IMR-90 (cell line): ENCODE measurements at regions of chr13 and their contacts with region 1.

Region 1: DNA sequence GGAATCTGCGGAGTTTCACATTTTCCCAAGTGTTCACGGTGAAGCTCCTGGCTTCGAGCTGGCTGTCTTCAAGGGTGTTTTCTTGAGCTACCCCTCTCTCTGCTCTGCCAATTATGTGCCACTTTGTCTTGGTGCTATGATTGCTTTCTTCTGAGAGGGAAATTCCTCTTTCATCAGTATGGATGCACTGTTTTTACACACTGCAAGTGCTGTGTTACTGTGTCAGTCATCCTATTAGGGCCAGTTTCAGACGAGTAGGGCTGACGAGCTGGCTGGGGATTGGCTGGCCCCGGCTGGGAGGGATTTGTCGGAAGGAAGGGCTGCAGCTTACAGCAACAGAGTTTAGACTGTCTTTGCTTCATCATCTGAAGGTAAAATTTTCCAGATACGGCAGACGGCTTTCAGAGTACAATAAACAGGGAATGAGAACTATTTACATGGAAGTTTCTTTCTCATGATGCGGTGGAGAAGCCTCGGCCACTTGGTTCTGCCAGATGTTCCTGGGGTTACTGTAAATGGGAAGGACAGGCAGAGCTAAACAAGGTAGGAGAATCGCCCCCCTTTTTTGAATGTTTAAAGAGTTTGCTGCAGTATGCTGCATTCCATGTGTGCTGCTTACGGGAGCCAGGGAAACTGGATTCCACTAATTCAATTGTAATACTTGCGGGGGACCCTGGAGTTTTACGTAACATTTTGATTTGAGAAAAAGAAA is at the start of gene MBNL2:
- DNase-seq: peak; percentile 94
- ATAC-seq: peak; percentile 97
- H3K4me3 ChIP-seq: peak within 1 kb of the TSS; percentile 90
- H3K27ac ChIP-seq: peak within 1 kb of the TSS; percentile 95
- H3K4me1 ChIP-seq: peaks cover 11% of the 10 kb centered on the region
- H3K27me3 ChIP-seq: no peaks in the 10 kb centered on the region
- CTCF ChIP-seq: no peak
- POLR2A ChIP-seq: peak; percentile 88
- RAD21 ChIP-seq: no peak
- total RNA-seq, gene MBNL2: 103 and 126 TPM in 2 replicates

Region 2: GRCh38 chr13:97339019-97339987 is 117.2 kb after region 1 on chr13:
- CTCF ChIA-PET with region 1: interaction called, 15 read pairs
- POLR2A ChIA-PET with region 1: no interaction called
- dilution Hi-C with region 1: no loop called
- in situ Hi-C with region 1: no loop called
- intact Hi-C with region 1: loop called (anchors 1 kb)
- DNase-seq: peak; percentile 98
- ATAC-seq: peak; percentile 88
- H3K4me3 ChIP-seq: no peak overlapping the region; the same call in 1 of the 2 replicates
- H3K27ac ChIP-seq: peak overlapping the region; percentile 86
- H3K4me1 ChIP-seq: peaks cover 14% of the 10 kb centered on the region
- H3K27me3 ChIP-seq: no peaks in the 10 kb centered on the region
- CTCF ChIP-seq: no peak
- POLR2A ChIP-seq: no peak
- RAD21 ChIP-seq: no peak

Region 3: GRCh38 chr13:97344265-97345175 is 122.4 kb after region 1 on chr13:
- CTCF ChIA-PET with region 1: interaction called, 15 read pairs
- POLR2A ChIA-PET with region 1: no interaction called
- dilution Hi-C with region 1: no loop called
- in situ Hi-C with region 1: no loop called
- intact Hi-C with region 1: loop called (anchors 1 kb)
- DNase-seq: peak; percentile 61
- ATAC-seq: peak; percentile 75
- H3K4me3 ChIP-seq: no peak overlapping the region
- H3K27ac ChIP-seq: 0 out of 2 replicates have a peak overlapping the region, but pooled peaks have one; percentile 33
- H3K4me1 ChIP-seq: peaks cover 10% of the 10 kb centered on the region
- H3K27me3 ChIP-seq: no peaks in the 10 kb centered on the region
- CTCF ChIP-seq: peak; percentile 68
- POLR2A ChIP-seq: no peak
- RAD21 ChIP-seq: peak; percentile 75

Region 4: GRCh38 chr13:97359181-97360057 is 137.3 kb after region 1 on chr13:
- CTCF ChIA-PET with region 1: no interaction called
- POLR2A ChIA-PET with region 1: no interaction called
- dilution Hi-C with region 1: no loop called
- in situ Hi-C with region 1: no loop called
- intact Hi-C with region 1: loop called (anchors 2 kb)
- DNase-seq: peak; percentile 92
- ATAC-seq: peak; percentile 95
- H3K4me3 ChIP-seq: no peak overlapping the region
- H3K27ac ChIP-seq: no peak overlapping the region
- H3K4me1 ChIP-seq: peaks cover 3% of the 10 kb centered on the region; the same call in 1 of the 2 replicates
- H3K27me3 ChIP-seq: no peaks in the 10 kb centered on the region
- CTCF ChIP-seq: peak; percentile 81
- POLR2A ChIP-seq: 0 out of 2 replicates have a peak, but pooled peaks have one; percentile 37
- RAD21 ChIP-seq: peak; percentile 91

Region 5: DNA sequence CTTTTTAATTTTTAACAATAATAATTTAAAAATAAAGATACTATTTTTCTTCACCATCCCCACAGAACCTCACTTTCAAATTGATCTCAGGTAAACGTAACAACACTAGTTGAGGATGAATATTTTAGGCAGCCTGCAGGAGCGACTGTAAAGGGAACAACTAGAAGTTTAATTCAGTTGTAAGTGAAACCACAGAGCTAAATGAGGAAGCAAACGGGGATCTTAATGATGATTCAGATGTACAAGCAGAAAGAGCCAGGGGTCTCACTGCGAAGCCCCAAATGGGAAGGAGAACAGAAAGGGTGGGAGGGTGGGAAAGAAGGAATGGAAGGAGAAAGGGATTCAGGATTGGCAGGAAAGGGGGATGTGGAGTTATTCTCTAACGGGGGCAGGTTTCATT is 157.2 kb after region 1 on chr13:
- CTCF ChIA-PET with region 1: no interaction called
- POLR2A ChIA-PET with region 1: interaction called, 10 read pairs
- dilution Hi-C with region 1: no loop called
- in situ Hi-C with region 1: no loop called
- intact Hi-C with region 1: no loop called
- DNase-seq: no peak
- ATAC-seq: no peak
- H3K4me3 ChIP-seq: no peak overlapping the region
- H3K27ac ChIP-seq: no peak overlapping the region
- H3K4me1 ChIP-seq: peaks cover 2% of the 10 kb centered on the region; the same call in 1 of the 2 replicates
- H3K27me3 ChIP-seq: no peaks in the 10 kb centered on the region
- CTCF ChIP-seq: no peak
- POLR2A ChIP-seq: no peak
- RAD21 ChIP-seq: no peak